Kidney (tissue), 22 donors: ENCODE measurements at regions of chr7 and their contacts with region 1.

Region 1: DNA sequence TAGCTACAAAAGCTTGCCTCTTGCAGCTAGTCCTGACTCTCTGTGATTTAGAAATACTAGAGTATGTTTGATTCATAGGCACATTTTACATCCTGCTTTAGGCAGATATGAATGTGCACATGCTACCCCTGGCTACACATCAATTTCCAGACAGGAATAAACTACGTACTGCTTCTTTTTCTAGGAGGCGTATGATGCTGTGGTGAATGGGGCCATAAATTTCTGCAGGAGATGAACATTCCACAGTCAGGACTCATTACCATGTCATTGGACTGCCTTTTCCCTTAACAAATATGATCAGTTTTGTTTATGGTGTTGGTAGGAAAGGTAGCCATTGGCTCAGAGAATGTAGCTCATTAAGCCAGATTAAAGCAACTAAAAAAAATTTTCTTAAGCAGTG is 50.1 kb upstream of the IFRD1 start:
- DNase-seq: no peak
- H3K4me3 ChIP-seq: no peak overlapping the region
- H3K27ac ChIP-seq: no peak overlapping the region
- H3K4me1 ChIP-seq: no peaks in the 10 kb centered on the region
- H3K27me3 ChIP-seq: no peaks in the 10 kb centered on the region
- CTCF ChIP-seq: no peak

Region 2: DNA sequence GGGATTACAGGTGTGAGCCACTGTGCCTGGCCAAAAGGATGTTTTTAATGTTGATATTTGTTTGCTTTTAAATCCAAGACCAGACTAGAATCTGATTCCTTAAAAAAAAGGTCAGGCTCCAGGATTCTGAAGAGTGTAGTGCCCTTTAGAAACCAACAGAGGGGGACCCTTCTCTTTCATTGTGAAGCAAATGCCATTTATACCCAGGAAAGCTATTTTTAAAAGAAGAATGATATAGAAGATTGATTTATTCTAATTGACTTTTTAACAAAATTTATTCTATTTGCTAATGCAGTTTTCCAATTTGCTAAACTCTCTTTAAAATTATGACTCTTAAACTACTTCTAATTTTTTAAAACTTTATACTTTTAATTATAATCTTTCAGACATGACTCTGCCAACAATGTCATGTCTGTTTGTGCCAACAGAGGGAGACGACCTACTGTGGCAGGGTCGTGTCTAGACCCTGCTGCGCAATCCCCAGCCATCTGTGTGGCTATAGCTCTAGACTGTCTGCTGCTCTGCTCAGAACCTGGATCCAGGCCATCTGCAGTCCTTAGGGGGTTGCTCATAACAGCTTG is 636.8 kb before region 1 on chr7:
- intact Hi-C with region 1: loop called (anchors 10 kb)
- DNase-seq: peak in 3 of 5 donors; percentile 24 to 80 (median 69)
- H3K4me3 ChIP-seq: no peak overlapping the region
- H3K27ac ChIP-seq: no peak overlapping the region
- H3K4me1 ChIP-seq: no peaks in the 10 kb centered on the region
- H3K27me3 ChIP-seq: no peaks in the 10 kb centered on the region
- CTCF ChIP-seq: peak; percentile 24

Region 3: DNA sequence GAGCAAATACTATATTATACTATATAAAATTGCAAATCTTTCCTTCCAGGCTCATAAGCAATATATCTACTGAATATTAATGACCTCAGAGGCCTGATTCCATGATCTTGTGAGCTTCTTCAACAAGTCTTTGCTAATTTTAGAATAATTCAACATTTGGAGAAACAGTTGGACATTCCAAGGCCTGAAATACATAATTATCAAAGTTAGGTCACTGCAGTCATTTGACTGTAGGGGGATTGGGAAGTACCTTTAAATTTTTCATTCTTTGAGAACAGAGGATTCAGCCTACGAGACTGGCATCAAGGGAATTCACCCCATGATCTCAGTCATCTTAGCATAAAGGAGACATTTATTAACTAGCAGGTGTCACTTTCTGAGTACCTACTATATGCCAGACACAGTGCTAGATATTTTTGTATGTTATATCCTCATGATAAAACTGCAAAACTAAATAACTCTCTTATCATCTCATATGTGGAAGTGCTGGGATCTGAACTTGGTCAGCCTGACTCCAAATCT is 279.4 kb before region 1 on chr7:
- intact Hi-C with region 1: no loop called
- DNase-seq: no peak
- H3K4me3 ChIP-seq: no peak overlapping the region
- H3K27ac ChIP-seq: no peak overlapping the region
- H3K4me1 ChIP-seq: no peaks in the 10 kb centered on the region
- H3K27me3 ChIP-seq: no peaks in the 10 kb centered on the region
- CTCF ChIP-seq: no peak